Heart left ventricle (tissue), 16 donors: ENCODE measurements at regions of chr20 and their contacts with region 1.

Region 1: GRCh38 chr20:8043687-8044282 is 24.2 kb upstream of the TMX4 start:
- DNase-seq: peak in 1 of 5 donors; percentile 30
- ATAC-seq: peak in 2 of 4 donors; percentile 64 to 68
- H3K4me3 ChIP-seq: no peak overlapping the region
- H3K27ac ChIP-seq: no peak overlapping the region
- H3K4me1 ChIP-seq: peaks cover 0 to 2% (median 0%) of the 10 kb centered on the region in 12 donors
- H3K27me3 ChIP-seq: peaks cover 0 to 7% (median 0%) of the 10 kb centered on the region in 9 donors
- CTCF ChIP-seq: peak; percentile 61 to 87 (median 80)
- POLR2A ChIP-seq: no peak

Region 2: GRCh38 chr20:7935027-7935551 is 108.7 kb before region 1 on chr20:
- intact Hi-C with region 1: loop called in 1 of 10 experiments (anchors 5 kb)
- DNase-seq: no peak
- ATAC-seq: no peak
- H3K4me3 ChIP-seq: no peak overlapping the region
- H3K27ac ChIP-seq: no peak overlapping the region
- H3K4me1 ChIP-seq: peaks cover 0 to 4% (median 0%) of the 10 kb centered on the region in 12 donors
- H3K27me3 ChIP-seq: peaks cover 0 to 8% (median 0%) of the 10 kb centered on the region in 9 donors
- CTCF ChIP-seq: no peak
- POLR2A ChIP-seq: no peak

Region 3: DNA sequence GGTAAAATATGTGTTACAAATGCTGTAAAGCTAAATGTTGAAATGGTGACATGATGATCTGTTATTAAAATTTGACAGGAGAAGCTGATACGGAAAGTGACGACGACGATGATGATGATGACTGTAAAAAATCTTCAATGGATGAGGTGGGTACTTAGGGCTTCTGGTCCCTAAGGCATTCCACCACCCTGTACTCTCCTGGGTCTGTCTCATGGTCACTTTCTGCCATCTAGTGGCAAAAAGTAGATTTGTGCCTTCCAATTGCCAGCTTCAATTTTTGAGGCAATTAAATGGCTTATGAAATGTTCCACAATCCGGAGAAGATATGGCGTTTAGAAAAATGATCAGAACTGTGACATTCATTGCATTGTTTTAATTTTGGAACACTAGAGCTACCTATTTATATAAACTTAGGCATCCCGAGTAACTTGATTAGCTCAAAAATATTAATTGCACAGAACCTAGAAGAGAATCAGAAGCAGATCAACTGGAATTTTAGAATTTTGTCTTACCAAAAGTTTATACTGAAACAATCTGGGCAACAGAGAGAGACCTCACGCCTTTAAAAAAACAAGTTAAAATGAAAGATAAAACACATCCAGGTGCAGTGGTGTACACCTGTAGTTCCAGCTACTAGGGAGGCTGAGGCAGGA is 678.6 kb after region 1 on chr20:
- intact Hi-C with region 1: loop called (anchors 1 to 5 kb)
- DNase-seq: peak in 2 of 5 donors; percentile 26 to 27
- ATAC-seq: peak; percentile 53 to 86 (median 81)
- H3K4me3 ChIP-seq: no peak overlapping the region
- H3K27ac ChIP-seq: no peak overlapping the region
- H3K4me1 ChIP-seq: peaks cover 0 to 2% (median 0%) of the 10 kb centered on the region in 12 donors
- H3K27me3 ChIP-seq: no peaks in the 10 kb centered on the region
- CTCF ChIP-seq: peak; percentile 64 to 87 (median 80)
- POLR2A ChIP-seq: no peak